MCF 10A (cell line): ENCODE measurements at regions of chr13 and their contacts with region 1.

Region 1: DNA sequence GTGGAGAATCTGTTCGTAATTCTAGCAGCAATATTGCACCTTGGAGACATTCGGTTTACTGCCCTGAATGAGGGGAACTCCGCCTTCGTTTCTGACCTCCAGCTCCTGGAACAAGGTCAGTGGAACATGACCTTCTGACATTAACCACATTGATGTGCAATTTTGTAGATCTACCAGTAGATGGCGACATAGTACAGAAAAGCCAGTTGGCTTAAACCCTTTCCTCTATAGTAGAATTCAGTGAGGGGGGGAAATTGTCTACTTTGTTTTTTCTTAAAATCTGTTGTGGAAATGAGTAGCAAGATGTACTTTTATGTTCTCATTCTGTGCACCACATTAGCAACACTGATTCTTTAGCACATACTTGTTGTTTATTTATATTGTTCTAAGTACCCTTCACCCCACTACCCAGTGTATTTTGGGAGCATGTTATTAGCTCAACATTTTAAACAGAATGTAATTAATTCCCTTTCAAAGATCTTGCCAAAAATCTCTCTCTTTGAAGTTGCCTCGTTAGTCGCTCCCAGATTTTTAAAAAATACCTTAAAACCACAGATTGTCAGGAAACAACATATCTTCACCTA is 332.2 kb downstream of the MYO16 start:
- DNase-seq: peak; percentile 57
- H3K4me3 Mint-ChIP-seq: no peak overlapping the region
- H3K27ac Mint-ChIP-seq: no peak overlapping the region
- H3K4me1 Mint-ChIP-seq: peaks cover 43% of the 10 kb centered on the region
- H3K27me3 Mint-ChIP-seq: no peaks in the 10 kb centered on the region
- CTCF ChIP-seq: peak; percentile 79

Region 2: GRCh38 chr13:109156181-109156935 is 194.7 kb after region 1 on chr13:
- CTCF ChIA-PET with region 1: interaction called, 12 read pairs
- POLR2A ChIA-PET with region 1: interaction called, 9 read pairs
- intact Hi-C with region 1: no loop called
- DNase-seq: peak; percentile 82
- H3K4me3 Mint-ChIP-seq: peak overlapping the region; percentile 64
- H3K27ac Mint-ChIP-seq: peak overlapping the region; percentile 95
- H3K4me1 Mint-ChIP-seq: peaks cover 61% of the 10 kb centered on the region
- H3K27me3 Mint-ChIP-seq: no peaks in the 10 kb centered on the region
- CTCF ChIP-seq: no peak

Region 3: GRCh38 chr13:109389892-109390345 is 428.3 kb after region 1 on chr13:
- CTCF ChIA-PET with region 1: no interaction called
- POLR2A ChIA-PET with region 1: no interaction called
- intact Hi-C with region 1: loop called (anchors 5 kb)
- DNase-seq: peak; percentile 94
- H3K4me3 Mint-ChIP-seq: peak overlapping the region; percentile 54
- H3K27ac Mint-ChIP-seq: peak overlapping the region; percentile 95
- H3K4me1 Mint-ChIP-seq: peaks cover 21% of the 10 kb centered on the region
- H3K27me3 Mint-ChIP-seq: no peaks in the 10 kb centered on the region
- CTCF ChIP-seq: no peak

Region 4: DNA sequence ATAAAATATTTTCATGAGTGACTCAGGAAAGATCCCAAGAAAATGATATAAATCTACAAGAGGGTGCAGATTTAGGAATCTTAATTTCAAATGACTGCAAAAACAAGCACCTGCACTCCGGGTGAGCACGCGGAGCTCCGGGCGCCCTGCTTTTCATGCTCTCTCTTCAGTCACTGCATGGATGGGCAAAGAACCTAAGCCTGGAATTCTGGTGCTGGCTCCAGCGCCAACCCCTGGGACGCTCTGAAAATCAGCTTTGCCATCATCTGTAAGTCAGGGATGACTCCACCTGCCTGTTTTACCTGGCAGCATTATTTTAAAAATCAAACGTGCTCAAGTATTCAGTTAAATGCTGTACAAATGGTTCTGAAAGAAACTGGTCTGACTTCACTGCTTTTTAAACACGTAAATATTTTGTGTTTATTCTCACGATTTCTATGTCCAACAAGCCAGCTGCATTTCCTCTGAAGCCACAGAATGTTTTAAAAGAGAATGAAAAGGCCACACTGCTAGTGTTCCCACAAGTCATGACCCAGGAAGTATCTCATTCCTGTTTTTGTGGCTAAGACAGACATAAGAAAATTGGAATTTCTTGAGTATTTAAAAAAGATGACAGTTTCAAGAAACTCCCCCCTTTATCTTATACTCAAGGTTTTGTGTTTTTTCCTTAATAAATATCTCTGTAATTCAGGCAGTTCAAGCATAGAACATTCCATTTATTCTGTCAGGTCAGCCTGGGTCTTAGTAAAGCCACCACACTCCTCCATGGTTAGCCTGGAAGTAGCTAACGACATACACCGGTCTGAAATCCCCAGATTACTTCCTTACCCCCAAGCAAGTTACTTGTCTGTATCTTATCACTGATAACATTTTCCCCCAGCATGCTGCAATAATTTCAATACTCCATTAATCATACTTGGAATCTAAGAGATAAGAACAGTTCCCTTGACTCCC is 1264.3 kb after region 1 on chr13:
- CTCF ChIA-PET with region 1: no interaction called
- POLR2A ChIA-PET with region 1: no interaction called
- intact Hi-C with region 1: loop called (anchors 1 kb)
- DNase-seq: no peak
- H3K4me3 Mint-ChIP-seq: no peak overlapping the region
- H3K27ac Mint-ChIP-seq: no peak overlapping the region
- H3K4me1 Mint-ChIP-seq: peaks cover 5% of the 10 kb centered on the region
- H3K27me3 Mint-ChIP-seq: no peaks in the 10 kb centered on the region
- CTCF ChIP-seq: no peak